Naive thymus-derived CD4-positive, alpha-beta T cell (primary cell): ENCODE measurements at regions of chr1 and their contacts with region 1.

Region 1: GRCh38 chr1:160261893-160262794 is at the start of gene DCAF8:
- DNase-seq: peak; percentile 92 to 97 (median 96)
- ATAC-seq: peak; percentile 96
- H3K4me3 ChIP-seq: peak within 1 kb of the TSS; percentile 66
- H3K4me3 Mint-ChIP-seq: peak within 1 kb of the TSS; percentile 82 to 100 (median 97)
- H3K27ac ChIP-seq: peak within 1 kb of the TSS; percentile 93
- H3K27ac Mint-ChIP-seq: peak within 1 kb of the TSS; percentile 94 to 100 (median 96)
- H3K4me1 ChIP-seq: peaks cover 22 to 29% of the 10 kb centered on the region in 2 donors
- H3K4me1 Mint-ChIP-seq: peaks cover 23 to 59% (median 45%) of the 10 kb centered on the region in 7 donors
- H3K27me3 ChIP-seq: no peaks in the 10 kb centered on the region
- H3K27me3 Mint-ChIP-seq: peaks cover 0 to 3% (median 0%) of the 10 kb centered on the region in 5 donors
- total RNA-seq, gene DCAF8: 115 to 226 (median 176) TPM

Region 2: GRCh38 chr1:159077120-159077961 is 1184.8 kb before region 1 on chr1:
- CTCF ChIA-PET with region 1: no interaction called
- POLR2A ChIA-PET with region 1: no interaction called
- intact Hi-C with region 1: loop called in 1 of 2 experiments (anchors 5 kb)
- DNase-seq: peak in 2 of 9 donors; percentile 37 to 96
- ATAC-seq: peak; percentile 79
- H3K4me3 ChIP-seq: peak overlapping the region; percentile 38
- H3K4me3 Mint-ChIP-seq: peak overlapping the region in 3 of 10 donors; percentile 3 to 90 (median 38)
- H3K27ac ChIP-seq: peak overlapping the region; percentile 18
- H3K27ac Mint-ChIP-seq: peak overlapping the region in 3 of 9 donors; percentile 65 to 99 (median 65)
- H3K4me1 ChIP-seq: peaks cover 0 to 28% of the 10 kb centered on the region in 2 donors
- H3K4me1 Mint-ChIP-seq: peaks cover 0 to 40% (median 4%) of the 10 kb centered on the region in 7 donors
- H3K27me3 ChIP-seq: no peaks in the 10 kb centered on the region
- H3K27me3 Mint-ChIP-seq: peaks cover 0 to 3% (median 1%) of the 10 kb centered on the region in 5 donors

Region 3: DNA sequence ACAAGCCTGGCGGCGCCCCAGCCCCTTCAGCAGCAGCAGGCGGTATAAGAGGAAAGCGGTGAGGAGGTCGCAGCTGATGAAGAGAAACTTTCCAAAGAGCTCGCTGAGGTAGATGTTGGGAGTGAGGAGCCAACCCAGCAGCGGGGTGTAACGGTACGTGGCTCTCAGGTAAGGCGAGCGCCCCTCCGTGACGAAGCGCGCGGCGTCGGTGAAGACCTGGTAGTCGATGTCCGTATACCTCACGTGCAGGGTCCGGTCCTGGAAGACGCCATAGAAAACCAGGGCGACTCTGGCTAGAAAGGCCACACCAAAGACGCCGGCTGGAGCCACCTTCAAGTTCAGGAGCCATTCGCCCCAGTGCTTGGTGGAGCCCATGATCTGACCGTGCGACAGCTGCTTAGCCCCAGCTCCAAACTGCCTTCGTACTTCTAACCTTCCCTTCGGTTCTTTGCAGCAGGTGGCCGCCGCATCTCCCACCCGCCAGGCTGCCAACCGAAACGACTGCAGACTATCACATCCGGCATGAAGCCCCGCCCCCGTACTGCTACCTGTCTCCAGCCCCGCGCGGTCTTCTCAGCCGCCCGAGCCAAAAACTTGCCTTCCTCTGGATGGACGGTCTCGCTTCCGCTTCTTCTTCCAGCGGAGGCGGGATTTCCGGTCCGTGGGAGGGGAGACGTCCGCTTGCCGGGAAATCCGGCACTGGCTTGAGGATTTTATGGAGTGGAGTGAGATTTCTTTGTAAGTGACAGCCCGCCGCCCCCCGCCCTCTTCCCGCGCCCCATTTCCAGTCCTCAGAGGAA is 230.6 kb before region 1 on chr1 and contains the start of gene PIGM:
- CTCF ChIA-PET with region 1: no interaction called
- POLR2A ChIA-PET with region 1: no interaction called
- intact Hi-C with region 1: loop called in 1 of 2 experiments (anchors 2 kb)
- DNase-seq: peak; percentile 73 to 91 (median 90)
- ATAC-seq: peak; percentile 98
- H3K4me3 ChIP-seq: peak within 1 kb of the TSS; percentile 68
- H3K4me3 Mint-ChIP-seq: peak within 1 kb of the TSS; percentile 90 to 100 (median 98)
- H3K27ac ChIP-seq: peak within 1 kb of the TSS; percentile 69
- H3K27ac Mint-ChIP-seq: peak within 1 kb of the TSS; percentile 69 to 96 (median 89)
- H3K4me1 ChIP-seq: peaks cover 12 to 14% of the 10 kb centered on the region in 2 donors
- H3K4me1 Mint-ChIP-seq: peaks cover 30 to 56% (median 45%) of the 10 kb centered on the region in 7 donors
- H3K27me3 ChIP-seq: no peaks in the 10 kb centered on the region
- H3K27me3 Mint-ChIP-seq: peaks cover 0 to 18% (median 0%) of the 10 kb centered on the region in 5 donors
- total RNA-seq, gene PIGM: 4.0 to 11.4 (median 7.0) TPM

Region 4: GRCh38 chr1:160251687-160252526 is 10.2 kb before region 1 on chr1:
- CTCF ChIA-PET with region 1: interaction called, 17 read pairs
- POLR2A ChIA-PET with region 1: interaction called, 33 read pairs
- intact Hi-C with region 1: no loop called
- DNase-seq: peak in 8 of 9 donors; percentile 43 to 70 (median 60)
- ATAC-seq: peak; percentile 99
- H3K4me3 ChIP-seq: no peak overlapping the region
- H3K4me3 Mint-ChIP-seq: no peak overlapping the region
- H3K27ac ChIP-seq: peak overlapping the region; percentile 6
- H3K27ac Mint-ChIP-seq: peak overlapping the region in 7 of 9 donors; percentile 46 to 80 (median 62)
- H3K4me1 ChIP-seq: no peaks in the 10 kb centered on the region
- H3K4me1 Mint-ChIP-seq: peaks cover 6 to 34% (median 30%) of the 10 kb centered on the region in 7 donors
- H3K27me3 ChIP-seq: no peaks in the 10 kb centered on the region
- H3K27me3 Mint-ChIP-seq: no peaks in the 10 kb centered on the region

Region 5: GRCh38 chr1:160284782-160285344 is 22.7 kb after region 1 on chr1 and contains the start of gene PEX19:
- CTCF ChIA-PET with region 1: no interaction called
- POLR2A ChIA-PET with region 1: interaction called, 99 read pairs
- intact Hi-C with region 1: loop called (anchors 1 kb)
- DNase-seq: peak; percentile 85 to 95 (median 92)
- ATAC-seq: peak; percentile 100
- H3K4me3 ChIP-seq: peak within 1 kb of the TSS; percentile 95
- H3K4me3 Mint-ChIP-seq: peak within 1 kb of the TSS; percentile 95 to 100 (median 98)
- H3K27ac ChIP-seq: peak within 1 kb of the TSS; percentile 89
- H3K27ac Mint-ChIP-seq: peak within 1 kb of the TSS; percentile 93 to 99 (median 94)
- H3K4me1 ChIP-seq: peaks cover 11 to 16% of the 10 kb centered on the region in 2 donors
- H3K4me1 Mint-ChIP-seq: peaks cover 16 to 41% (median 31%) of the 10 kb centered on the region in 7 donors
- H3K27me3 ChIP-seq: no peaks in the 10 kb centered on the region
- H3K27me3 Mint-ChIP-seq: no peaks in the 10 kb centered on the region
- total RNA-seq, gene PEX19: 37.9 to 66.1 (median 49.2) TPM

Region 6: DNA sequence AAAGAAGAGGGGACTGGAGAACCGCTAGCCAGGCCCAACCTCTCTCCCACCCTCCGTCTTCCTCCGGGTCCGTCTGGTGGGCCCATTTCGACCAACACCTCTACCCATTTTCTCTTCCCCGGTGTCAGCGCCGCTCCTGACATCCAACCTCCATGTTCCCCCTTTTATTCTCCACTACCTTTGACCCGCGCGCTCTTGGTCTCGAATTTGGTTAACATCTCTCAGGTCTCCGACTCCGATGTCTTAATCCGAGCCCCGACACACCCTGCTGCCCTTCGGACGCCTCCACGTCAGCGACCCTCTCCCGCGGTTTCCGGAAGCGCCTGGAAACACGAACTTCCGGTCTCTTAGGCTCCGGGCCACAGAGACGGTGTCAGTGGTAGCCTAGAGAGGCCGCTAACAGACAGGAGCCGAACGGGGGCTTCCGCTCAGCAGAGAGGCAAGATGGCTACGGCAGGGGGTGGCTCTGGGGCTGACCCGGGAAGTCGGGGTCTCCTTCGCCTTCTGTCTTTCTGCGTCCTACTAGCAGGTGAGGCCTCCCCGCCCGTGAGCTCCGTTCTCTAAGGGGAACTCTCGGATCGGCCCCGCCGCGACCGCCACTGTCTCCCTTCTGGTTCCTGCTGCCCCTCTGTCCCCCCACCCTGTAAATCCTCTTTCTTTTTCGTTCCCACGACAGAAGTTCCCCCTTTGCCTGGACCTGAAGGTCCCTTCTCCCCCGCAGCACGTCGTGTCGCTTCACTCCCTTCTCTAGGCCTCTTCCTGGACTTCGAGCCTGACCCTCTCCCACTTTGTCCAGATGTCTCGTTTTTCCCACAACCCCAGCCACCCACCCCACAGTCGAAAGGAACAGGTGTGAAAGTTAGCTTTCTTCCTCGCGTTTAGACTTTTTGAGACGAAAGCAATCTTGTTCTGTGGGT is 81.1 kb after region 1 on chr1 and contains the starts of genes COPA and NCSTN:
- CTCF ChIA-PET with region 1: no interaction called
- POLR2A ChIA-PET with region 1: interaction called, 5 read pairs
- intact Hi-C with region 1: loop called (anchors 1 kb)
- DNase-seq: peak; percentile 67 to 93 (median 86)
- ATAC-seq: peak; percentile 98
- H3K4me3 ChIP-seq: peak within 1 kb of the TSS; percentile 87
- H3K4me3 Mint-ChIP-seq: peak within 1 kb of the TSS; percentile 99 to 100 (median 100)
- H3K27ac ChIP-seq: peak within 1 kb of the TSS; percentile 98
- H3K27ac Mint-ChIP-seq: peak within 1 kb of the TSS; percentile 98 to 100 (median 100)
- H3K4me1 ChIP-seq: peaks cover 23 to 29% of the 10 kb centered on the region in 2 donors
- H3K4me1 Mint-ChIP-seq: peaks cover 32 to 78% (median 66%) of the 10 kb centered on the region in 7 donors
- H3K27me3 ChIP-seq: no peaks in the 10 kb centered on the region
- H3K27me3 Mint-ChIP-seq: no peaks in the 10 kb centered on the region
- total RNA-seq, gene COPA: 104 to 151 (median 118) TPM
- total RNA-seq, gene NCSTN: 68.4 to 91.1 (median 73.5) TPM